A673 (cell line): ENCODE measurements at regions of chr11 and their contacts with region 1.

Region 1: DNA sequence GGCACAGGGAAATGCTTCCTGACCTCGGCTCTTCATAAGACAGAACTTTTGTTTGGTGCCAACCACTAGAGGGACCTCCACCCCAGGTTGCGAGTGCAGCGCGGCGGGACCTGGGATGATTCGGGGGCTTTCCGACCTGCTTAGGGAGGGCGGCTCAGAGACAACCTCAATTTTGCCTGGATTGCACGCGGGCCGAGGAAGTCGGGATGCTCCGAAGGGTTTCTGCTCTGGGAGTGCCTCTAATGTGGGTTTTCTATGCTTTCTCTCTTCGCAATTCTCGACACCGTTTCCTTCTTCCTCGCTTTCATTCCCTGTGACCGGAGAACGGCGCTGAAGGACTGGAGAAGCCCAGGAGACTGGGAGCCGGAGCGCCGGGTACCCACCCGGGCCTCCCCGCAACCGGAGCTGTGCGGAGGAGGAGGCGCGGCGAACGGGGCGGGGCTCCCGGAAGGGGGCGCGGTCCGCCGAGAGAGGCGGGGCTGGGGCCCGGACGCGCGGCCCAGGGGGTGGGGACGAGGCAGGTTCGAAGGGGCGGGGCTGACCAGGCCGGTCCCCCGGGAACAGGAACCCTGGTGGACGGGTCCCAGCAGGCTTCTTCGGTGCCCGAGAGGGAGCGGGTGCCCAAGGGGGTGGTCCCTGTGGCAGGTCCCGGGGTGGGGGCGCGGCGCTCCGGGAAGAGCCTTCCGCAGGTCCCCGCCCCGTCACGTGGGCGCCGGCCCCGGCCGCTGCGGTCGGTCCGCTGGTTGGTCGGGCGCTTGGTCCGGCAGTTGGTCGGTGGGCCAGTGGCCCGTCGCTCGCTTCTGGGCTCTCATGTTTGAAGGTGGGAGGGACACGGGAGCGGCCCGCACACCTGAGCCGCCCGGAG is at the start of gene PPFIBP2:
- DNase-seq: peak; percentile 63
- H3K4me3 ChIP-seq: peak within 1 kb of the TSS; percentile 61
- H3K27ac ChIP-seq: no peak within 1 kb of the TSS
- H3K4me1 ChIP-seq: peaks cover 8% of the 10 kb centered on the region
- H3K27me3 ChIP-seq: peaks cover 20% of the 10 kb centered on the region
- CTCF ChIP-seq: peak; percentile 60
- total RNA-seq, gene PPFIBP2: 5.7 and 6.8 TPM in 2 replicates

Region 2: GRCh38 chr11:7467652-7468051 is 45.8 kb before region 1 on chr11:
- CTCF ChIA-PET with region 1: no interaction called
- POLR2A ChIA-PET with region 1: no interaction called
- intact Hi-C with region 1: no loop called
- DNase-seq: no peak
- H3K4me3 ChIP-seq: no peak overlapping the region
- H3K27ac ChIP-seq: no peak overlapping the region
- H3K4me1 ChIP-seq: no peaks in the 10 kb centered on the region
- H3K27me3 ChIP-seq: no peaks in the 10 kb centered on the region
- CTCF ChIP-seq: no peak

Region 3: GRCh38 chr11:7665473-7666291 is 152.2 kb after region 1 on chr11:
- CTCF ChIA-PET with region 1: no interaction called
- POLR2A ChIA-PET with region 1: no interaction called
- intact Hi-C with region 1: loop called (anchors 2 kb)
- DNase-seq: peak; percentile 57
- H3K4me3 ChIP-seq: no peak overlapping the region
- H3K27ac ChIP-seq: no peak overlapping the region
- H3K4me1 ChIP-seq: no peaks in the 10 kb centered on the region
- H3K27me3 ChIP-seq: no peaks in the 10 kb centered on the region
- CTCF ChIP-seq: peak; percentile 88